ENCODE measurements at regions of chr9 and their contacts with region 1.

Region 1: DNA sequence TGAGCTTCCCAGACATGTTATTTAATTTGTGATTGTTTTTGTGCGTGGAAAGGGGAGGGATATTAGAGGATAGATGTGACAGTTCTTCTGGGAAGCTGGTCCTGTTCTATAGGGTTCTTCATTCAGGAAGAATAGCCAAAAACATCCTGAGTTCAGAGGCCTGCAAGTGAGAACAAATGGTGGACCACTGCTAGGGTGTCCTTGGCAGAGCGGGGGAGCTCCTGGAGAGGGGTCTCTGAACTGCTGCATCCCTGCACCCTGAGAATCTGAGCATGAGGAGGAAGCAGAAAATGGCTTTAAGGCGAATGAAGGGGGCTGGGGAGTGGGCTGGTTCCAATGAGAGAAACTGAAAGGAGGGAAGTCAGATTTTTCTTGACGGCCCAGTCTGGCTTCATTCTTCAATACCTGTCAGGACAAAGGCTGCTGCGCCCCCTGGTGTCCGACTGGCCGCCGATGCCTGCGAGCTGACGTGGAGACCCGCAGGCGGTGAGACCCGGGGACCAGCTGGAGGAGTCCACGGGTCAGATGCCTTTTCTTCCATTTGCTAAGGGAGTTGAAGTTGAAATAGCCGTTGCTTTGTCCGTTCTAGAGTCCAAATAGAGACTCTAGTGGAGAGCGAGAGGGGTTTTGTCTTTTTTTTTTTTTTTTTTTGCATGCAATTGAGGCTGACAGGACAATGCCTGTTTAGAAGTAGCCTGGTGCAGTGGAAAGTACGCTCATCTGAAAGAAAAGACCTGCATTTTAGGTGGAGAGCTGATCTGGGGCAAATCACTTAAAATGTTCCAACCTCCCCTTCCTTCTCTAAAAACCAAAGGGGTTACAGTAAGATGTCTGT is 39.5 kb upstream of the NFIB start:
- DNase-seq: peak; percentile 30
- H3K4me3 ChIP-seq: no peak overlapping the region
- H3K27ac ChIP-seq: no peak overlapping the region
- H3K27me3 ChIP-seq: peaks cover 65% of the 10 kb centered on the region
- CTCF ChIP-seq: peak; percentile 94

Region 2: DNA sequence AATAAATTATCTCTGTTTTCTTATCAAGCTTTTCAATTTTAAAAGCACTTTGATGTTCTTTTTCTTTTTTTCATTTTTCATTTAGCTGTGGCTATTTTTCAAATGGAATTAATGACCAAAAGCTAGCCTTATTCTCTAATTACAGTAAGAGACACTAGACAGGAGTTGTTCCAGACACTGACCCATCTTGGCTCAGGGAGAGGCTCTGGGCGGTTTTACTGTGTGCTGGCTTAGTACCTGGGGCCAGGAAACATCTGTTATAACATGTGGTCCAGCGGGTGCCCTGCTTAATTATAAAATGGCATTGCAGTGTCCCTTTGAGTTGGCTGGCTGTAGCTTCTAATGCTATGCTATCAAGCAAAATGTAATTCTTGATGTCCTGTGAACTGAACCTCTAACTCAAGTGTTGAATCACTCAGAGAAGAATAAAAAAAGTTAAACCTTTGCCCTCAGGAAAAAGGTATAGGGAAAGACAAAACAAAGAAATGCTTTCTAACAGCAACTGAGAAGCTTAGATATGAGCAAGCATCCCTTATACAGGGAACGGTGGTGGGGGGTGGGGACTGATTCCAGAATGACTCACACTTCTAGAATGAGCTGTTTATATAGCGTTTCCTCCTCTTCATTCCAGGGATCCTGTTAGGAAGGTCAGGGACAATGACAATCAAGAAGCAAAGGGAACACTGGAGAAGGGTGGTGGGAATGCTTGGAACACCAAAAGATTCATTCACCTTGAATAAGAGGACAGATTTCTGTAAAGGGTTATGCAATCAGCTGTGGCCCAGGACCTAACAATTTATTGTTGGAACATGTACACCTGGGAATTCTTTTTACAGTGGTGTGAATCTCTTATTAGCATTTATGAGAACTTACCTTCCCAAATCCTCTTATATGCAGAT is 19.2 kb after region 1 on chr9:
- CTCF ChIA-PET with region 1: interaction called, 17 read pairs
- POLR2A ChIA-PET with region 1: no interaction called
- DNase-seq: peak; percentile 29
- H3K4me3 ChIP-seq: no peak overlapping the region
- H3K27ac ChIP-seq: no peak overlapping the region
- H3K27me3 ChIP-seq: no peaks in the 10 kb centered on the region
- CTCF ChIP-seq: no peak

Measured in AG04450 (cell line).